Activated CD4-positive, alpha-beta memory T cell treated with anti-CD3 and anti-CD28 coated beads for 36 hours (primary cell): ENCODE measurements at regions of chr9 and their contacts with region 1.

Region 1: GRCh38 chr9:86098824-86099700 is at the start of gene GOLM1:
- DNase-seq: peak; percentile 47
- H3K4me3 Mint-ChIP-seq: peak within 1 kb of the TSS; percentile 73
- H3K27ac Mint-ChIP-seq: no peak within 1 kb of the TSS
- H3K4me1 Mint-ChIP-seq: peaks cover 8% of the 10 kb centered on the region
- H3K27me3 Mint-ChIP-seq: peaks cover 38% of the 10 kb centered on the region
- total RNA-seq, gene GOLM1: 2.0 to 2.1 TPM

Region 2: GRCh38 chr9:86022687-86023266 is 76.3 kb before region 1 on chr9:
- CTCF ChIA-PET with region 1: no interaction called
- POLR2A ChIA-PET with region 1: no interaction called
- intact Hi-C with region 1: no loop called
- DNase-seq: no peak
- H3K4me3 Mint-ChIP-seq: no peak overlapping the region
- H3K27ac Mint-ChIP-seq: no peak overlapping the region
- H3K4me1 Mint-ChIP-seq: no peaks in the 10 kb centered on the region
- H3K27me3 Mint-ChIP-seq: no peaks in the 10 kb centered on the region

Region 3: GRCh38 chr9:86202338-86202882 is 103.3 kb after region 1 on chr9:
- CTCF ChIA-PET with region 1: interaction called, 12 read pairs
- POLR2A ChIA-PET with region 1: no interaction called
- intact Hi-C with region 1: no loop called
- DNase-seq: peak; percentile 35
- H3K4me3 Mint-ChIP-seq: no peak overlapping the region
- H3K27ac Mint-ChIP-seq: no peak overlapping the region
- H3K4me1 Mint-ChIP-seq: peaks cover 4% of the 10 kb centered on the region
- H3K27me3 Mint-ChIP-seq: peaks cover 1% of the 10 kb centered on the region

Region 4: GRCh38 chr9:86230858-86231257 is 131.8 kb after region 1 on chr9:
- CTCF ChIA-PET with region 1: no interaction called
- POLR2A ChIA-PET with region 1: no interaction called
- intact Hi-C with region 1: no loop called
- DNase-seq: no peak
- H3K4me3 Mint-ChIP-seq: no peak overlapping the region
- H3K27ac Mint-ChIP-seq: no peak overlapping the region
- H3K4me1 Mint-ChIP-seq: no peaks in the 10 kb centered on the region
- H3K27me3 Mint-ChIP-seq: peaks cover 3% of the 10 kb centered on the region

Region 5: DNA sequence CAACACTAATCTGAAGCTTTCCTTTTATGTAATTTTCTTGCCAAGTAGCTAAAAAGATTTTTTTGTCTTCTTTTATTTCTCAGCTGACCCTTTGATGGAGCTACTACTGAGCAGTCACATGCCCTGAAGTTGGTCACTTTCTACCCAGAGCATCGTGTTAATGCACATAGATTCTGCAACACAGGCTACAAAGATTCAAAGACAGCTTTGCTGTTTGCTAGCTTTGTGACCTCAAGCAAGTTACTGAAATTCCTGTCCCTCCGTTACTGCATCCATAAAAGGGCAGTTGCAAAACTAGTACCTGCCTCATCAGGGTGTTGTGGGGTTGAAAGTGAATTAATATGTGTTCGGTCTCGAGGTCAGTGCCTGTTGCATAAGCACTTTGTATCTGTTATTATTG is 668.3 kb after region 1 on chr9:
- CTCF ChIA-PET with region 1: no interaction called
- POLR2A ChIA-PET with region 1: no interaction called
- intact Hi-C with region 1: no loop called
- DNase-seq: no peak
- H3K4me3 Mint-ChIP-seq: no peak overlapping the region
- H3K27ac Mint-ChIP-seq: no peak overlapping the region
- H3K4me1 Mint-ChIP-seq: no peaks in the 10 kb centered on the region
- H3K27me3 Mint-ChIP-seq: no peaks in the 10 kb centered on the region